Left ventricle myocardium inferior (tissue), 1 donor: ENCODE measurements at regions of chr2 and their contacts with region 1.

Region 1: DNA sequence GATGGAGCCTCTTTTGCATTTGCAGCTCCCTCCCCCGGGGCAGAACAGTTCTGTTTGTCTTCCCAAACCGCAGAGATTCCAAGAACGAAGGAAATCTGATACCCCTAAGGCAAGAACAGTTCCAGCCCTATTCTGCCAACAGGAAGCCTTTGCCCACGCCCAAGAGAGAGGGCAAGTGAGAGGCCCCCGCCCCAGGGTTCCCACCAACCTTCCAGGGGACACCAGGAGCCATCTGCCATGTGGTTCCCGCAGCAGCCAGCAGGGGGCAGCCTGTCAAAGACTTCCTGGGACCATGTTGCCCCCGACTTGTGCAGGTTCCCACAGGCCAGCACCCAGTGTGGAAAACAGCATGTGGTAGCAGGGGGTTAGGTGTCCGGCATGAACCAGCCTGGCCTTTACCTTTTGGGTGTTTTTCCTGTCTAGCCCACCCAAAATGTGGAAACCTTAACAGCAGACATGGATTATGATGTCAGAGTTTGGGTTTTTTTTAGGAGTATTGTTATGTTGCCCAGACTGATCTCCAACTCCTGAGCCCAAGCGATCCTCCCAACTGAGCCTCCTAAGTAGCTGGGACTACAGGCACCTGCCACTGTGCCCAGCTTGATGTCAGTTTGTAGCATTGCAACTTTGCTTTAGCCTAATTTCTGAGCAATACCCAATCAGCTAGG is 21.7 kb upstream of the EFHD1 start:
- DNase-seq: peak; percentile 69
- H3K4me3 ChIP-seq: no peak overlapping the region
- H3K27ac ChIP-seq: no peak overlapping the region
- H3K4me1 ChIP-seq: no peaks in the 10 kb centered on the region
- H3K27me3 ChIP-seq: no peaks in the 10 kb centered on the region
- CTCF ChIP-seq: peak; percentile 86

Region 2: DNA sequence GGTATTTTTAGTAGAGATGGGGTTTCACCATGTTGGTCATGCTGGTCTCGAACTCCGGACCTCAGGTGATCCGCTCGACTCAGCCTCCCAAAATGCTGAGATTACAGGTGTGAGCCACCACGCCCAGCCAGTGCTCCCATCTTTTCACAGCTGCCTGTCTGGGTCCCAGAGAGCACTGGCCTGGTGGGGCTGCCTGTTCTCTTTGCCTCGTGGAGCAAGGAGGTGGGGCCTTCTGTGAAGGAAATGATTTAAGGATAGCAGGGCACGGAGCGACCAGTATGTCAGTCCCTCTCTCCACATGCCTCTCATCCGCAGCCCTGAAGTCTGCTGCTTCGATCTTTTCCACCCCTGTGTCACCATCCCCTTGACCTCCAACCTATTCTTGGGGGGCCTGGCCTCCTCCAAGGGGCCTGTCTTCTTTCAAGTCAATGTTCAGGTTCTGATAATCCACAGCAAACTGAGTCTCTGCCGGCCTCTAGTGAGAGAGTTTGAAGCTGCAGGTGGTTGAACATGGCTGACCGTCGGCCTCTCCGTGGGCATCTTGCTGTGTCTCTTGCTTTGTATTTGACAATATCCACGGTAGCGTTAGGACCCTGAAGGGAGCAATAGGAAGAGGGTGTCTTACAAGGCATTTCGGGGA is 57.2 kb after region 1 on chr2:
- intact Hi-C with region 1: loop called (anchors 5 kb)
- DNase-seq: no peak
- H3K4me3 ChIP-seq: no peak overlapping the region
- H3K27ac ChIP-seq: peak overlapping the region; percentile 30
- H3K4me1 ChIP-seq: peaks cover 43% of the 10 kb centered on the region
- H3K27me3 ChIP-seq: no peaks in the 10 kb centered on the region
- CTCF ChIP-seq: peak; percentile 68